MCF 10A (cell line): ENCODE measurements at regions of chr10 and their contacts with region 1.

Region 1: DNA sequence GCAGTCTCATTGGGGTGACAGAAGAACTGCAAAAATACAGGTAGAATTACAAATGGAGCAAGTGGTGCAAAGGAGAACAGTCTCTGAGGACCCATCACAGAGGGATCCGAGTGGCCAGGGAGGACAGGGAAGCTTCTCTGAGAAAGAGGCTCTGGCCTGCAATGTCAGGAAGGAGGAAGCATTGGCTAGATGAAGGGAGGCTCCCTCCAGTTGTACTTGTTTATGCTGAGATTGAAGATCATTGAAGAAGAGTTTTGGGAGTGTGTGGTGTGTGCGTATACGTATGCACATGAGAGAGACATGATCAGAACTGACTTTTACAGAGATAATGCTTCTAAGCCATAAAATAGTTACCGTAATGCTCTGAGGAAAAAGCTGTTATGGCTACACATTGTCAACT is 274.7 kb upstream of the FZD8 start:
- DNase-seq: no peak
- H3K4me3 Mint-ChIP-seq: no peak overlapping the region
- H3K27ac Mint-ChIP-seq: no peak overlapping the region
- H3K4me1 Mint-ChIP-seq: peaks cover 13% of the 10 kb centered on the region
- H3K27me3 Mint-ChIP-seq: no peaks in the 10 kb centered on the region
- CTCF ChIP-seq: no peak

Region 2: GRCh38 chr10:35875016-35875676 is 41.6 kb before region 1 on chr10:
- CTCF ChIA-PET with region 1: no interaction called
- POLR2A ChIA-PET with region 1: no interaction called
- intact Hi-C with region 1: no loop called
- DNase-seq: no peak
- H3K4me3 Mint-ChIP-seq: no peak overlapping the region
- H3K27ac Mint-ChIP-seq: no peak overlapping the region
- H3K4me1 Mint-ChIP-seq: peaks cover 16% of the 10 kb centered on the region
- H3K27me3 Mint-ChIP-seq: no peaks in the 10 kb centered on the region
- CTCF ChIP-seq: no peak

Region 3: DNA sequence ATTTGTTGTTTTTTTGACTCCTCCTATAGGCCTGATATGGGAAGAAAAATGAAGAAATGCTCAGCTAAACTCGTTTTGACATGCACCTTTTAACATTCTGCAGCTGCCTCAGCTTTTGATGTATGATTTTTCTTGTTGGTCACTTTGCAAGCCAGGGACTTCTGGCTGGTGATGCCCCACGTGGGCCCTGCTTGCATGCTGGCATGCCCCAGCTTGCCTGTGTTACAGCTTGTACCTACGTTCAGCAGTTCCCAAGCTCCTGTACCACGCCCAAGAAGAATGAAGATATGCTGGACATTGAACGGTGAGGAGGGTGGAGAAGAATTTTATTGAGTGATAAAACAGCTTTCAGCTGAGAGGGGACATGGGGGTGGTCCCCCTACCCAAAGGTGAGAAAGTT is 29.1 kb before region 1 on chr10:
- CTCF ChIA-PET with region 1: no interaction called
- POLR2A ChIA-PET with region 1: interaction called, 11 read pairs
- intact Hi-C with region 1: no loop called
- DNase-seq: peak; percentile 62
- H3K4me3 Mint-ChIP-seq: peak overlapping the region; percentile 66
- H3K27ac Mint-ChIP-seq: peak overlapping the region; percentile 96
- H3K4me1 Mint-ChIP-seq: peaks cover 24% of the 10 kb centered on the region
- H3K27me3 Mint-ChIP-seq: no peaks in the 10 kb centered on the region
- CTCF ChIP-seq: no peak

Region 4: GRCh38 chr10:37857287-37858211 is 1940.8 kb after region 1 on chr10 and contains the start of gene ZNF248:
- CTCF ChIA-PET with region 1: no interaction called
- POLR2A ChIA-PET with region 1: no interaction called
- intact Hi-C with region 1: loop called (anchors 5 kb)
- DNase-seq: peak; percentile 95
- H3K4me3 Mint-ChIP-seq: peak within 1 kb of the TSS; percentile 78
- H3K27ac Mint-ChIP-seq: peak within 1 kb of the TSS; percentile 97
- H3K4me1 Mint-ChIP-seq: peaks cover 16% of the 10 kb centered on the region
- H3K27me3 Mint-ChIP-seq: no peaks in the 10 kb centered on the region
- CTCF ChIP-seq: no peak
- total RNA-seq, gene ZNF248: 5.7 and 10.0 TPM in 2 replicates